ENCODE measurements at regions of chr1 and their contacts with region 1.

Region 1: GRCh38 chr1:47578026-47578720 is 140.3 kb downstream of the FOXD2 start:
- DNase-seq: no peak
- H3K4me3 ChIP-seq: no peak overlapping the region
- H3K27ac ChIP-seq: no peak overlapping the region
- H3K4me1 ChIP-seq: peaks cover 3% of the 10 kb centered on the region
- H3K27me3 ChIP-seq: no peaks in the 10 kb centered on the region
- CTCF ChIP-seq: no peak
- POLR2A ChIP-seq: no peak

Region 2: DNA sequence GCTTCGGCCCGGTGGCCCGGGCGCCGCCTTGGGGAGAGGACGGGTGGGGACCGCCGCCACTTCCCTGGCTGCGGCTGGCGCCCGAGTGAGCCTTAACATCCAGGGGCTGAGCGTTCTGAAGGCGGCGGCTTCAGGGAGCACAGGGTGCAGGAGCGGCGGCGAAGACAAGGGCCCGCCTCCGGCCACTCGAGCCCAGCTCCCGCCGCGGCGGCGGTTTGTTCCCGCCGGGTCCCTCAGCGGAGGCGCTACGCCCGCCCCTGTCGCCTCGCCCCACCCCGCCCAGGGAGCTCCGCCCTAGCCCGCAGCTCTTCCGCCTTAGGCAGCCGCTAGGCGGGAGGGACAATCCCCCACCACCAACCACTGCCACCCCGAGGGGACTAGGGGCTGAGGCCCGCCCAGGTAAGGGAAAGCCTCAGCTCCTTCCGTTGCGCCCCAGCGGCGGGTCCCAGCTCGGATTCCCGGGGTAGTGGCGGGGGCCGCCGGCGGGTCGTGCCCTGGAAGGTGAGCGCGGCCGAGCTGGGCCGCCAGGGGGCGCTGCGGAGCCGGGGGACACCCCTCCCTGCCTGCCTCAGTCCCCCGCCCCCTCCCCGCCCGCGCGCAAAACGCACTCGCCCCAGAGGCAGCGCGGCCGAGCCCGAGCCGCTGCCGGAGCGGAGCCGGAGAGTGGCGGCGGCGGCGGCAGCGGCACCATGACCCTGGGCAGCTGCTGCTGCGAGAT is 140.6 kb before region 1 on chr1 and contains the start of gene FOXD2:
- intact Hi-C with region 1: loop called (anchors 5 kb)
- DNase-seq: peak; percentile 66
- H3K4me3 ChIP-seq: peak within 1 kb of the TSS; percentile 47 to 57
- H3K27ac ChIP-seq: peak within 1 kb of the TSS; percentile 80 to 86
- H3K4me1 ChIP-seq: no peaks in the 10 kb centered on the region
- H3K27me3 ChIP-seq: peaks cover 35% of the 10 kb centered on the region
- CTCF ChIP-seq: peak; percentile 98 to 99 (median 98)
- POLR2A ChIP-seq: peak; percentile 19
- total RNA-seq, gene FOXD2: 1.2 to 1.8 TPM

Region 3: GRCh38 chr1:47561523-47562007 is 16.6 kb before region 1 on chr1:
- intact Hi-C with region 1: no loop called
- DNase-seq: no peak
- H3K4me3 ChIP-seq: no peak overlapping the region
- H3K27ac ChIP-seq: no peak overlapping the region
- H3K4me1 ChIP-seq: no peaks in the 10 kb centered on the region
- H3K27me3 ChIP-seq: no peaks in the 10 kb centered on the region
- CTCF ChIP-seq: no peak
- POLR2A ChIP-seq: no peak

Region 4: DNA sequence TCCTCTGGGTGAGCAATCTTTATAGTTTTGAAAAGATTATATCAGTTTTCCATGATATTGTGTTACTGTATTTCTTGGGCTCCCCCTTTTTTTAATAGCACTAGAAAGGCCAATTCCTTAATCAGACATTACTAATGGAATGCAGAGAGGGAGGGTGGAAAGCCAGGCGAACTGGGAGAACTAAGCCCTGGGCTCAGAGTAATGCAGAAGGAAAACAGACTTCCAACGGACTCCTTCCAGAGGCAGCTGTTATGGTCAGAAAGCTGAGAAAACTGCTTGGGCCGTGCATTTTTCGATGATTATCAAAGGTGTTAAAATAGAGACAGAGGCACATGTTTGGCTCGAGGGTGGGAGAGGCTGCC is 66.0 kb after region 1 on chr1:
- intact Hi-C with region 1: loop called (anchors 2 kb)
- DNase-seq: no peak
- H3K4me3 ChIP-seq: no peak overlapping the region
- H3K27ac ChIP-seq: no peak overlapping the region
- H3K4me1 ChIP-seq: no peaks in the 10 kb centered on the region
- H3K27me3 ChIP-seq: no peaks in the 10 kb centered on the region
- CTCF ChIP-seq: no peak
- POLR2A ChIP-seq: no peak

Region 5: GRCh38 chr1:47703981-47704596 is 125.9 kb after region 1 on chr1:
- intact Hi-C with region 1: loop called (anchors 5 kb)
- DNase-seq: no peak
- H3K4me3 ChIP-seq: no peak overlapping the region
- H3K27ac ChIP-seq: no peak overlapping the region
- H3K4me1 ChIP-seq: peaks cover 3% of the 10 kb centered on the region
- H3K27me3 ChIP-seq: peaks cover 7% of the 10 kb centered on the region
- CTCF ChIP-seq: peak in 1 of 4 experiments; percentile 31
- POLR2A ChIP-seq: no peak

Measured in prostate gland (tissue), 2 donors.